K562 (cell line): ENCODE measurements at regions of chr4 and their contacts with region 1.

Region 1: GRCh38 chr4:87006676-87007527 is 72.1 kb downstream of the AFF1 start:
- DNase-seq: peak; percentile 84 to 94 (median 89)
- ATAC-seq: peak; percentile 91
- H3K4me3 ChIP-seq: peak overlapping the region; percentile 79
- H3K27ac ChIP-seq: peak overlapping the region; percentile 97
- H3K4me1 ChIP-seq: peaks cover 9 to 35% of the 10 kb centered on the region in 2 experiments; a peak in 4 of 5 replicates
- H3K27me3 ChIP-seq: no peaks in the 10 kb centered on the region
- CTCF ChIP-seq: peak in 2 of 3 experiments; percentile 5 to 43; a peak in 3 of 6 replicates
- EP300 ChIP-seq: no peak
- POLR2A ChIP-seq: peak; percentile 98
- RAD21 ChIP-seq: peak in 1 of 2 experiments; percentile 31; a peak in 3 of 4 replicates

Region 2: GRCh38 chr4:86921608-86922252 is 85.2 kb before region 1 on chr4:
- CTCF ChIA-PET with region 1: no interaction called
- POLR2A ChIA-PET with region 1: interaction called, 11 read pairs
- in situ Hi-C with region 1: no loop called
- intact Hi-C with region 1: no loop called
- DNase-seq: no peak
- ATAC-seq: no peak
- H3K4me3 ChIP-seq: no peak overlapping the region
- H3K27ac ChIP-seq: no peak overlapping the region
- H3K4me1 ChIP-seq: peaks cover 10 to 17% of the 10 kb centered on the region in 2 experiments; a peak in 4 of 5 replicates
- H3K27me3 ChIP-seq: no peaks in the 10 kb centered on the region
- CTCF ChIP-seq: no peak
- EP300 ChIP-seq: no peak
- POLR2A ChIP-seq: no peak
- RAD21 ChIP-seq: no peak

Region 3: GRCh38 chr4:86934771-86935565 is 71.9 kb before region 1 on chr4 and contains the start of gene AFF1:
- CTCF ChIA-PET with region 1: no interaction called
- POLR2A ChIA-PET with region 1: interaction called, 36 read pairs
- in situ Hi-C with region 1: loop called (anchors 5 kb)
- intact Hi-C with region 1: loop called (anchors 2 kb)
- DNase-seq: peak; percentile 96 to 97 (median 97)
- ATAC-seq: peak; percentile 86
- H3K4me3 ChIP-seq: peak within 1 kb of the TSS; percentile 76
- H3K27ac ChIP-seq: peak within 1 kb of the TSS; percentile 87
- H3K4me1 ChIP-seq: peaks cover 5 to 17% of the 10 kb centered on the region in 2 experiments
- H3K27me3 ChIP-seq: no peaks in the 10 kb centered on the region
- CTCF ChIP-seq: peak in 2 of 3 experiments; percentile 19 to 46; a peak in 4 of 6 replicates
- EP300 ChIP-seq: peak; percentile 24; the same call in 1 of the 2 replicates
- POLR2A ChIP-seq: peak; percentile 57; the same call in 1 of the 2 replicates
- RAD21 ChIP-seq: 0 out of 4 replicates have a peak, but pooled peaks of 1 of the 2 experiments have one; percentile 6
- polyA plus RNA-seq, gene AFF1: 4.1 to 9.9 TPM

Region 4: GRCh38 chr4:86961605-86962295 is 45.2 kb before region 1 on chr4:
- CTCF ChIA-PET with region 1: no interaction called
- POLR2A ChIA-PET with region 1: interaction called, 6 read pairs
- in situ Hi-C with region 1: no loop called
- intact Hi-C with region 1: loop called (anchors 2 kb)
- DNase-seq: peak; percentile 35 to 91 (median 64)
- ATAC-seq: peak; percentile 94
- H3K4me3 ChIP-seq: no peak overlapping the region; the same call in 1 of the 2 replicates
- H3K27ac ChIP-seq: peak overlapping the region; percentile 87
- H3K4me1 ChIP-seq: peaks cover 9 to 47% of the 10 kb centered on the region in 2 experiments; a peak in 4 of 5 replicates
- H3K27me3 ChIP-seq: no peaks in the 10 kb centered on the region
- CTCF ChIP-seq: peak in 1 of 3 experiments; percentile 15; a peak in 1 of 6 replicates
- EP300 ChIP-seq: peak; percentile 99
- POLR2A ChIP-seq: no peak
- RAD21 ChIP-seq: peak in 1 of 2 experiments; percentile 28; a peak in 1 of 4 replicates

Region 5: DNA sequence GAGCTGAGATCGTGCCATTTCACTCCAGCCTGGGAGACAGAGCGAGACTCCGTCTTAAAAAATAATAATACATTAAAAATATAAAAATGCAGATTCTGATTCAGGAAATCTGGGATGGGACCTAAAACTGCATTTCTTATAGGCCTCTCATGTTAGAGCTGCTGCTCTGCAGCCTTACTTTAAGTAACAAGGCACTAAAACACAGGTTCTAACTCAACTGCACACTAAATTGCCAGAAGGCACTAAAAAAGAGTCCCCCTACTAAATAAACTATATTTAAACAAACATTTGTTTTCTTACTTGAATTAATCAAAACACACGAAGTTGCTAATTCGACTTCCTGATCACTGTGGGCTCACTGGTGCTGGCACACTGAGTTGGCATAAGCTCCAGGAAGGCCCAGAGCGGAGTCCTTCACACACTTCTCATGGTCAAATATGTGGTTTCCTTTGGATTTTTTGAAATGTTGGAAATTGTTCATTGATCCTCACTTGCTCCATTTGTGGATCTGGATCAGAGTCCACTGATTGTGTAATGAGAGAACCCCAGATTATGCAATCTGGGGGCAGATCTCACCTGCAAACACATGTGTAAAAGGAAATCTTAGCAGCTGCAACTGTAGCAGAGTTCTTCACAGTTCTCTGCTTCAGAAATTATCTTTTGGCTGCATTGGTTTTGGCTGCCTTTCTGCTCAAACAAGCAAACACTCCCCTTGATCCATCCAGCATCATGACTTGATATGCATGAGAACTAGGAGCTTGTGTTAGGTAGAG is 12.8 kb before region 1 on chr4:
- CTCF ChIA-PET with region 1: no interaction called
- POLR2A ChIA-PET with region 1: interaction called, 19 read pairs
- in situ Hi-C with region 1: no loop called
- intact Hi-C with region 1: no loop called
- DNase-seq: no peak
- ATAC-seq: peak; percentile 15; the same call in 1 of the 3 replicates
- H3K4me3 ChIP-seq: no peak overlapping the region
- H3K27ac ChIP-seq: no peak overlapping the region
- H3K4me1 ChIP-seq: peaks cover 5 to 30% of the 10 kb centered on the region in 2 experiments; a peak in 4 of 5 replicates
- H3K27me3 ChIP-seq: no peaks in the 10 kb centered on the region
- CTCF ChIP-seq: no peak
- EP300 ChIP-seq: no peak
- POLR2A ChIP-seq: no peak
- RAD21 ChIP-seq: no peak

Region 6: GRCh38 chr4:87058356-87059073 is 51.6 kb after region 1 on chr4:
- CTCF ChIA-PET with region 1: no interaction called
- POLR2A ChIA-PET with region 1: interaction called, 14 read pairs
- in situ Hi-C with region 1: no loop called
- intact Hi-C with region 1: loop called (anchors 2 kb)
- DNase-seq: peak; percentile 39 to 77 (median 58)
- ATAC-seq: peak; percentile 92
- H3K4me3 ChIP-seq: no peak overlapping the region
- H3K27ac ChIP-seq: peak overlapping the region; percentile 41; the same call in 2 of the 3 replicates
- H3K4me1 ChIP-seq: peaks cover 11 to 46% of the 10 kb centered on the region in 2 experiments; a peak in 4 of 5 replicates
- H3K27me3 ChIP-seq: no peaks in the 10 kb centered on the region
- CTCF ChIP-seq: peak; percentile 64 to 73 (median 68)
- EP300 ChIP-seq: peak; percentile 22; the same call in 1 of the 2 replicates
- POLR2A ChIP-seq: no peak
- RAD21 ChIP-seq: peak; percentile 53 to 74

Region 7: GRCh38 chr4:87093443-87094123 is 86.7 kb after region 1 on chr4:
- CTCF ChIA-PET with region 1: no interaction called
- POLR2A ChIA-PET with region 1: interaction called, 8 read pairs
- in situ Hi-C with region 1: no loop called
- intact Hi-C with region 1: loop called (anchors 2 kb)
- DNase-seq: peak; percentile 28 to 68 (median 54)
- ATAC-seq: peak; percentile 83
- H3K4me3 ChIP-seq: no peak overlapping the region
- H3K27ac ChIP-seq: no peak overlapping the region
- H3K4me1 ChIP-seq: peaks cover 5 to 23% of the 10 kb centered on the region in 2 experiments; a peak in 3 of 5 replicates
- H3K27me3 ChIP-seq: no peaks in the 10 kb centered on the region
- CTCF ChIP-seq: peak; percentile 55 to 79 (median 71)
- EP300 ChIP-seq: no peak
- POLR2A ChIP-seq: no peak
- RAD21 ChIP-seq: peak; percentile 56 to 75

Region 8: DNA sequence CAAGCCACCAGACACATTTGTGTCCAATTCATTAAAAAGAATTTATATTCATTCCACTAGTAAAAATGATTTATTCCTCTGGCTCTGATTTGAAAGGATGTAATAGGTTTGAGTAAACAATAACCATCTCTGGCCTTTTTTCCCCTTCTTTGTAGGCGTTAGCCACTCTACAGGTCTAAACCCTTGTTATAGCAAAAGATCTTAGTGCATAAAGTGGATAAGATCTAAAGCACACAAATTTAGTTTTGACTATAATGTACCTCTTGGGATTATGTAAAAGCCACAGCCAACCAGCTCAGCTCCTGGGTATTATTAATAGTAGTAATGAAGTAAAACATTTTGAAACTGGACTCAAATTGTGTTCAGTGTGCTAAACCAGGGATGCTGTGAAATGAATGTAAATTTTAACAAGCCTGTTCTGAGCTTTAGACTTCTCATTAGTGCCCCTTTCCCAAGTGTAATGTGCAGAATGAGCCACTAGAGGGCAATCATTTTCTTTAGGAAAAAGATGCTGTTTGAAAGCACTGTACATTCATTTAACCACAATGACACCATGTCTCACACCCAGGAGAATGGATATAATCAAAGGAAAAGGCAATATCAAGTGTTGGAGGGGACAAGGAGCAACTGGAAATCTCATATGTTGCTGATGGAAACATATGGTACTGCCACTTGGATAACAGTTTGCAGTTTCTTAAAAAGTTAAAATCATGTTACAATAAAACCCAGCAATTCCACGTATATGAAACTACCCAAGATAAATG is 143.8 kb after region 1 on chr4:
- CTCF ChIA-PET with region 1: no interaction called
- POLR2A ChIA-PET with region 1: no interaction called
- in situ Hi-C with region 1: no loop called
- intact Hi-C with region 1: no loop called
- DNase-seq: peak; percentile 51 to 79 (median 54)
- ATAC-seq: peak; percentile 89
- H3K4me3 ChIP-seq: no peak overlapping the region
- H3K27ac ChIP-seq: no peak overlapping the region
- H3K4me1 ChIP-seq: no peaks in the 10 kb centered on the region
- H3K27me3 ChIP-seq: no peaks in the 10 kb centered on the region
- CTCF ChIP-seq: peak; percentile 72 to 93 (median 85)
- EP300 ChIP-seq: no peak
- POLR2A ChIP-seq: no peak
- RAD21 ChIP-seq: peak; percentile 81 to 90

Region 9: DNA sequence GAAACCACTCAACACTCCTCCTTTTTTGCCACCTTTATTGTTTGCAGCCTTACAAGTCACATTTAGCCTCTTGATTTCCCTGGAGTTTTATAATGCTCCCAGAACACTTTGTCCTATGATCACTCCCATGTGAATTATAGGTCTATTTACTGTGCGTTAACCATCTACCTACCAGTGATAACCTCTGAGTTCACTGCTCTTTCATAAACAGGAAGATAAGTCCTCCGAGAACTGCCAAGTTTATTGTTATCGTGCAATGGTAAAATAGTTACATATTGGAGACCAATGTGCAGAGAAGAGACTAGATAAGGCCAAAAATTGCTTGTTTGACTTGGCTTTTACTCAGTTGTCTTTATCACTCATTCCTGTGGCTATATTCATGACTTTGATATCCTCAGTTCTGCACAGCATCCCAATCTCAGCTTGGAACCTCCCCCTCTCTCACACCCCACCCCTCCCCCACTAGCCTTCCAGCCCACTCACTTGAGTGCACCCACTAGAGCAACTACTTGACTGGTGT is 402.6 kb after region 1 on chr4:
- CTCF ChIA-PET with region 1: no interaction called
- POLR2A ChIA-PET with region 1: no interaction called
- in situ Hi-C with region 1: no loop called
- intact Hi-C with region 1: no loop called
- DNase-seq: no peak
- ATAC-seq: peak; percentile 31; the same call in 1 of the 3 replicates
- H3K4me3 ChIP-seq: no peak overlapping the region
- H3K27ac ChIP-seq: no peak overlapping the region
- H3K4me1 ChIP-seq: peaks cover 0 to 3% of the 10 kb centered on the region in 2 experiments; a peak in 3 of 5 replicates
- H3K27me3 ChIP-seq: no peaks in the 10 kb centered on the region; a peak in 2 of 5 replicates
- CTCF ChIP-seq: no peak
- EP300 ChIP-seq: no peak
- POLR2A ChIP-seq: no peak
- RAD21 ChIP-seq: no peak